Breast epithelium (tissue), 4 donors: ENCODE measurements at regions of chr16 and their contacts with region 1.

Region 1: GRCh38 chr16:66640724-66641314 is 36.3 kb downstream of the CMTM3 start:
- DNase-seq: no peak
- H3K4me3 ChIP-seq: no peak overlapping the region
- H3K27ac ChIP-seq: no peak overlapping the region
- H3K4me1 ChIP-seq: no peaks in the 10 kb centered on the region
- H3K27me3 ChIP-seq: no peaks in the 10 kb centered on the region
- CTCF ChIP-seq: no peak
- POLR2A ChIP-seq: no peak

Region 2: GRCh38 chr16:67006930-67007658 is 366.3 kb after region 1 on chr16:
- intact Hi-C with region 1: loop called (anchors 5 kb)
- DNase-seq: no peak
- H3K4me3 ChIP-seq: no peak overlapping the region
- H3K27ac ChIP-seq: no peak overlapping the region
- H3K4me1 ChIP-seq: no peaks in the 10 kb centered on the region
- H3K27me3 ChIP-seq: no peaks in the 10 kb centered on the region
- CTCF ChIP-seq: no peak
- POLR2A ChIP-seq: no peak

Region 3: DNA sequence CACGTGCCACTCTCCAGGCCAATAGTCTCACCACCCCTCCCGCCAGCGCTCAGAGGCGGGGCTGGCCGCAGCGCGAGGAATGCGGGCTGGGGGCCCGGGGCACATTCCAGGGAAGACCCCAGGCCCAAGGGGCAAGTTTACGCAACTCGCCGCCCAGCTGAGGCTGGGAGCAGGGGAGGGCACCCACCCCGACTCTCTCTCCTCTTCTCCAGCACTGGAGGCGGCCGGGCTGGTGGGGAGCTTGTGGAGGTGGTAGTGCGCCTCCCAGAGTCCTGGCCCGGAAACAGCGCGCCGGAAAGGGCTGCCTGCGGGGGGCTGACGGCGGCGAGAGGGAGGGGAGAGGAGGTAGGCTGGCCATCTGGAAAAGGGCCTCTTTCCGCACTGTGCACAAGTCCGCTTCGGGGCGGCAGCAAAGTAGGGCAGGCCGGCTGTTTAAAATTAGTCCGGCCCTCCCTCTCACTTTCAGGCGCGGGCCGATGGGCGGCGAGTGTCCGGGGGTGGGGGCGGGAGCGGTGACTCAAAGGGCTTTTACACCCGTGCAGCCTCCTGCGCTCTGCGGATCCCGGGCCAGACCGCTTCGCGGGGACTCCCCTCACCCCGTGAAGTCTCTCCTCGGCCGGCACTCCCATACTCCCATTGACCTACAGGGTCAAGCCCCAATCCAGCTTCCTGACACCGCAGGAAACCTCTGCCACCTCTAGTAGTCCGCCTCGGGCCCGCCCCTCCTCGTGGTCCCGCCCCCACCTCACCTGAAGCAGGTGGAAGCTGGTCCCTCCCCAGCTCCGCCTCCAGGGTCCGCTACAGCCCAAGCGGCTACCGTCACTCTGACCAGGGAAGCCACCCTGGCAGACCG is 605.5 kb after region 1 on chr16:
- intact Hi-C with region 1: no loop called
- DNase-seq: peak; percentile 90 to 92
- H3K4me3 ChIP-seq: peak overlapping the region; percentile 69 to 91 (median 78)
- H3K27ac ChIP-seq: peak overlapping the region; percentile 76 to 96
- H3K4me1 ChIP-seq: peaks cover 12 to 28% of the 10 kb centered on the region in 2 donors
- H3K27me3 ChIP-seq: no peaks in the 10 kb centered on the region
- CTCF ChIP-seq: peak in 1 of 3 donors; percentile 26
- POLR2A ChIP-seq: peak; percentile 58